Activated B cell treated with CpG ODN at 0.5 μM for 24 hours (primary cell): ENCODE measurements at regions of chr16 and their contacts with region 1.

Region 1: DNA sequence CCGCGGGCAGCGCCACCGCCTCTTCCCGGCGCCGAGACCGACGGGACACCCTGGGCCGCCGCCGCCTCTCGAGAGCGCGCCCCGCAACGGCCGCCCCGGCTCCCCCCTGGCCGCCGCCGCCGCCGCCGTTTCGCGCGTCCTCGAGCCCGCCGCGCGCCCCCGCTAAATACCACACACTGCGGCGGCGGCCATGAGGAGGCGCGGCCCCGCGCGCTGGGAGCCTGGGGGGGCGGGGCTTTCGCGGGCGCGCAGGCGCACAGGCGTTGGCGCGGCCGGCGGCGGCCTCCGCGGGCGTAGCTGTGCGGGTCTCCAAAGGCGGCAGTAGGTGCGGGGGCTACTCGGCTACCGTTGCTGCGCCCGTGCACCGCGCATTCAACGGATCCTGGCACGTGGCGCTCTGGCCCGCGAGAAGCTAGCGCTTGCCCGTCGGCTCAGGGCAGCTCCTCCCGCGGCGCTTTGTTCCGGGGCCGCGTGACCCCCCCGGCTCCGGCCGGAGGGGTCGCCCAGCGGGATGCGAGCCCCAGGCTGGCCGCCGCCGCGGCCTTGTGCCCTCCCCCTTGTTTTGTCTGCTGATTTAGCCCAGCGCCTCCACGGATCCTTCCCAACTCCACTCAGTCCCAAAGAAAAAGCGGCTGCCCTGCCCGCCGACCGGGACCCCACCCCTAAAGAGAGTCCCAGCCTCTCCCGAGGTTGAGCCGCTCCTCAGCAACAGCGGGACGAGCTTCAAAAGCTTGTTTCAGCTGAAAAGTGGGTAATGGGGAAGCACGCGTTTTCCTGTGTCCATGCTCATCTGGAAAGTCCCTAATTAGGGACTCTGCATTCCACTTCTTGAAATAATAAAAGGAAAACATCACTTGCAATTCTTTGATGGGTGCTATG is at the start of gene SIAH1:
- DNase-seq: peak; percentile 97
- ATAC-seq: peak; percentile 80
- H3K4me3 Mint-ChIP-seq: peak within 1 kb of the TSS; percentile 93
- H3K27ac Mint-ChIP-seq: peak within 1 kb of the TSS; percentile 90
- H3K4me1 Mint-ChIP-seq: peaks cover 33% of the 10 kb centered on the region
- H3K27me3 Mint-ChIP-seq: no peaks in the 10 kb centered on the region
- CTCF ChIP-seq: no peak
- total RNA-seq, gene SIAH1: 26.9 and 31.5 TPM in 2 replicates

Region 2: GRCh38 chr16:48310908-48311641 is 74.4 kb before region 1 on chr16:
- CTCF ChIA-PET with region 1: no interaction called
- POLR2A ChIA-PET with region 1: no interaction called
- intact Hi-C with region 1: no loop called
- DNase-seq: no peak
- ATAC-seq: no peak
- H3K4me3 Mint-ChIP-seq: no peak overlapping the region
- H3K27ac Mint-ChIP-seq: no peak overlapping the region
- H3K4me1 Mint-ChIP-seq: peaks cover 4% of the 10 kb centered on the region
- H3K27me3 Mint-ChIP-seq: no peaks in the 10 kb centered on the region
- CTCF ChIP-seq: no peak

Region 3: DNA sequence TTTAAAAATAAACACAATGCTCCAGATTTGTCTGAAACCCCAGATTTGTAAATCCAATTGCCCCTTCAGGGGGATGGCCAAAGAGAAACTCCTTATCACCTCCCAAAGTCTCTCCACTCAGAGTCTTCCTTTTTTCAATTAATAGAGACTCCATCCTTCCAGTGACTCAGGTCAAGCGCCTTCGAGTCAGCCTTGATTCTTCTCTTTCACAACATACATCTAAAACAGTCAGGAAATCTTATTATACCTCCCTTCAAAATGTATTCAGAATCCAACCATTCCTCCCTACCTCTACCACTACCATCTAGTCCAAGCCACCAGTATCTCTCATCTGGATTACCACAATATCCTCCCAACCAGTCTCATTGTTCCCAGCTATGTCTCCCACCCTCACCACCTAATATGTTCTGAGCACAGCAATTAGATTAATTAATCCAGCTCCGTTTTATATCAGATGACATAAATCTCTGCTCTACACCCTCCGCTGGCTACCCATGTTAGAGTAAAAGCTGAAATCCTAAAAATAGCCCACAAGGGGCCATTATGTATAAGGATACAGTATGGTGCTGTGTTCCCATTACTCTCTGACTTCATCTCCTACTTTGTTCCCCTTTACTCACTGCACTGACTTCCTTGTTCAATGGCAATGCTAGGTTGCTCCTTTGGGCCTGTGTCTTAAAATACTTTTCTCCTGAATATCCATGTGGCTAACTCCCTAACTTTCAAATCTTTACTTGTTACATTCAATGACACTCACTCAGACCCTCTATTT is 12.1 kb before region 1 on chr16:
- CTCF ChIA-PET with region 1: no interaction called
- POLR2A ChIA-PET with region 1: interaction called, 3 read pairs
- intact Hi-C with region 1: loop called (anchors 1 kb)
- DNase-seq: no peak
- ATAC-seq: no peak
- H3K4me3 Mint-ChIP-seq: no peak overlapping the region
- H3K27ac Mint-ChIP-seq: no peak overlapping the region
- H3K4me1 Mint-ChIP-seq: peaks cover 40% of the 10 kb centered on the region
- H3K27me3 Mint-ChIP-seq: no peaks in the 10 kb centered on the region
- CTCF ChIP-seq: no peak

Region 4: DNA sequence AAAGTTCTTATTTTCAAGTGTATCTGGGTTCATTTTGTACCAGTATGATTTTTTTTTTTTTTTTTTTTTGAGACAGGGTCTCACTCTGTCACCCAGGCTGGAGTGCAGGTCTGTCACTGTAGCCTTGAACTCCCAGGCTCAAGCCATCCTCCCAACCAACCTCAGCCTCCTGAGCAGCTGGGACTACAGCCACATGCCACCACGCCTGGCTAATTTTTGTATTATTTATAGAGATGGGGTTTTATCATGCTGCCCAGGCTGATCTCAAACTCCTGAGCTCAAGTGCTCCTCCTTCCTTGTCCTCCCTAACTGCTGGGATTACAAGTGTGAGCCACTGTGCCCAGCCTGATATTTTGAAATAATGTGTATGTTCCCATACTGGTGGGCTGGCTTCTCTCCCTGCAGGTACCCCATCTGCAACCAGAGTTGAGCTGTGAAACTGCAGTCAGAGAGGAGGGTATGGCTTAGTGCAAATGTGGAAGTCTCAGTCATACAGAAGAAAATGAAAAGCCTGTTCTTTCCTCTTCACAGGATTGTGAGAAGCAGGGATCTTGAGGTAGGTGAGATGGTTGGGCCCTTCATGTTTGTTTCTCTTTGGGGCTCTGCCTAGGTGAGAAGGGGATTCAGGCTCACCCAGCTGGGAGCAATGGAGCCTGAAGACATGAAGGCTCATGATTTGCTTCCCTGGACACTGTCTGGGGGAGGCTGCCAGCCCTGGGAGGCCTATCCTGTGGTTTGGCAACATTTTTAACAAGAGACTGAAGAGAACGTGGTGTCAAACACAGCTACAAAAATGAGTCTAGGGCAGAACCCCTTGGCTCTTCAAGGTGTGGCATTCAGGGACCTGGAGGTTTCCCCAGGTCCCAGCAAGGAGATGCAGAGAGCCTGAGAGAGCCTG is 41.0 kb after region 1 on chr16:
- CTCF ChIA-PET with region 1: no interaction called
- POLR2A ChIA-PET with region 1: interaction called, 34 read pairs
- intact Hi-C with region 1: no loop called
- DNase-seq: no peak
- ATAC-seq: peak; percentile 50
- H3K4me3 Mint-ChIP-seq: peak overlapping the region; percentile 36
- H3K27ac Mint-ChIP-seq: peak overlapping the region; percentile 87
- H3K4me1 Mint-ChIP-seq: peaks cover 50% of the 10 kb centered on the region
- H3K27me3 Mint-ChIP-seq: no peaks in the 10 kb centered on the region
- CTCF ChIP-seq: no peak

Region 5: GRCh38 chr16:48452977-48453760 is 67.7 kb after region 1 on chr16:
- CTCF ChIA-PET with region 1: no interaction called
- POLR2A ChIA-PET with region 1: interaction called, 3 read pairs
- intact Hi-C with region 1: loop called (anchors 1 kb)
- DNase-seq: no peak
- ATAC-seq: no peak
- H3K4me3 Mint-ChIP-seq: no peak overlapping the region
- H3K27ac Mint-ChIP-seq: no peak overlapping the region
- H3K4me1 Mint-ChIP-seq: peaks cover 30% of the 10 kb centered on the region
- H3K27me3 Mint-ChIP-seq: no peaks in the 10 kb centered on the region
- CTCF ChIP-seq: no peak